HCT116 (cell line): ENCODE measurements at regions of chr17 and their contacts with region 1.

Region 1: DNA sequence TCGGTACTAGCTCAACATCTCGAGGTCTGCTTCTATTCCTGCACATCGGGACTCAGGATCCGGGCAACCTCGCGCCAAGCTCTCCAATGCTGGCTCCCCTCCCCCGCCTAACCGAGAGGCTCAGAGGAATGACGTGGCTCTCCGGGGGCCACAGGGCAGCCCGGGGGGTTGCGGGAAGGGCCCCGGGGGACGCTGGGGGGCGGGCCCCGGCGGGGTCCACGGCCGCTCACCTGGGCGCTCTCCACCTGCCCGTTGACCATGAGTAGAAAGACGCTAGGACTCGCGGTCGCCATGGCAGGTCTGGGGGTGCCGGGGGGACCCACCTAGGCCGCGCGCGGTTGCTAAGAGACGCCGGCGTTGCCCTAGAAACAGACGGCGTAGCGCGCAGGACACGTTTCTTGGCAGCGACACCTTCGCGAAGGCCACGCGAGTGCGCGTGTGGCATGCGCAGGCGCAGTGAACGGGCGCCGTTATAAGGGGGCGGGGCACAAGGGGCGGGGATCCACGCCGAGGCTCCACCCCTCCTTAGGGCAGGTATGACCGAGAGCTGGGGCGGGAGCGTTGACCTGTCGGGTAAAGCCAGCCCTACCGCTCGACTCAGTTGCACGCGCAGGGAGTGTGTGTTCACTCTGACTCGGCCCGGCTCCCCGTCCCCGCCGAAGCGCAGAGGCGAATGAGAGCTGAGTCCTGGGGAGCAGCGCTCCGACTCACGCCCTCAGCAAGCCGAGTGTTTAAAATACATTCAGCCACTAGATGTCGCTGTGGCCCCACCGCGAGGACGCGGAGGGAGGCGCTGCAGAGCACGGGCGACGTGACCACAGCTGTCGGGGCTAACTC is at the start of gene B9D1:
- DNase-seq: peak; percentile 87
- ATAC-seq: peak; percentile 86
- H3K4me3 ChIP-seq: peak within 1 kb of the TSS; percentile 80 to 91
- H3K27ac ChIP-seq: peak within 1 kb of the TSS; percentile 76
- H3K4me1 ChIP-seq: peaks cover 9 to 28% of the 10 kb centered on the region in 2 experiments
- H3K27me3 ChIP-seq: no peaks in the 10 kb centered on the region
- CTCF ChIP-seq: peak; percentile 73 to 99 (median 92)
- POLR2A ChIP-seq: peak; percentile 0
- RAD21 ChIP-seq: peak; percentile 100
- total RNA-seq, gene B9D1: 20.0 TPM

Region 2: DNA sequence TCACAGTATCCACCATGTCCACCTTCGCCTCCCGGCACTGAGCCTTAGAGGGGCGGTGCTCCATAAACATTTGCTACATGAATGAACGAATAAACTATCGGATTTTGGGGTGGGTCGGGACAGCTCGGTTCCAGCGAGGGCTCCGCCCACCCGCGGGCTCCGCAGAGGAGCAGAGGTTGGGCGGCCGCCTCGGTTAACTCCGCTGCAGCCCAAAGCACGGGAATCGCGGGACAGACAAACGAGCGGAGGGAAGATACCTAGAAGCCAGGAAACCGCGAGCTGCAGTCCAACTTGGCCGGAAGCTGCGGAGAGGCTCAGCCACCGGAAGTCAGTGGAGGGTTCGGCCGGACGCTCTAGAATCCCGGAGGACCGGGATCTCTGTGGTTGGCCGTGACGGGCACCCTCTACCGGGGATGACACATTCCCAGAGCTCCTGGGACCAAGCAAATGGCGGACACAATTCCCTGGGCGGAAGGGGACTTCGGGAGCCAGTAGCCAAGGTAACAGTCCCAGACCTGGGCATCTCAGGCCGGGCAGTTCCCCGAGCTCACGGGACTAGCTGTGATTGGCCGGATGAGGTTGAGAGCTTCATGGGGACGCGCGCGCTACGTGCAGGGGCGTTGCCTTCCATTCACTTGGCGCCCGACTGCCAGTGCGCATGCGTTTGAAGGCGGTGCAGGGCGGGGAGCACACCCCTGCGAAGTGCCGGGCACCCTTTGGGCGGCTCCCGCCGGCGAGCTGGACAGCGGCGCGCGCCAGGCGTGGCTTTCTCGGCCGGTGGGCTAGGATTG is 15.3 kb after region 1 on chr17:
- CTCF ChIA-PET with region 1: interaction called, 41 read pairs
- POLR2A ChIA-PET with region 1: interaction called, 13 read pairs
- RAD21 ChIA-PET with region 1: interaction called, 4 to 12 read pairs
- intact Hi-C with region 1: no loop called
- DNase-seq: peak; percentile 96
- ATAC-seq: peak; percentile 92
- H3K4me3 ChIP-seq: peak overlapping the region; percentile 67 to 94
- H3K27ac ChIP-seq: peak overlapping the region; percentile 84
- H3K4me1 ChIP-seq: peaks cover 9 to 18% of the 10 kb centered on the region in 2 experiments; a peak in 3 of 4 replicates
- H3K27me3 ChIP-seq: no peaks in the 10 kb centered on the region
- CTCF ChIP-seq: no peak
- POLR2A ChIP-seq: peak; percentile 83
- RAD21 ChIP-seq: no peak

Region 3: DNA sequence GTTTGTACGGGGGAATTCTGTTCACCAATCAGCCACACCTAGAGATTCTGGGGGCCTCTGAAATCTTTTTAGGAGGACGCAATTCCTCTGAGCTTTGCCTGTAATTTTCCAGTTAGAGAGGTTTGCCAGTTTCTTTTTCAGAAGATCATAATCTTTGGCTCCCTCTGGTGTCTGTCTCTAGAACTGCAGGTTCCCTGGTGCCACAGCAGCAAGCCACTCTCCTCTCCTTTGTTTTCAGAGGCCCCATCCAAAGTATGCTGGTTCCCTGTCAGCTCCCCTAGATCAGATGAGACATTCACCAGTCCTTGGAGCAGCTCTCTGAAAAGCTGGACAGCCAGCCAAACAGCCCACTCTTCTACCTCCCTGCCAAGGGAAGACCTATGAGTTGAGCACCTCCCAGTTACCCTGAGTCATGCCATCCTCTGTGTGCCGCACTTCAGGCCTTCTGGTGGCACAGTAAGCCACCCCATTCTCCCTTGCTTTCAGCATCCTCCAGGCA is 84.6 kb after region 1 on chr17:
- CTCF ChIA-PET with region 1: interaction called, 69 read pairs
- POLR2A ChIA-PET with region 1: interaction called, 3 read pairs
- RAD21 ChIA-PET with region 1: interaction called, 9 to 12 read pairs
- intact Hi-C with region 1: loop called (anchors 1 kb)
- DNase-seq: peak; percentile 62
- ATAC-seq: peak; percentile 90
- H3K4me3 ChIP-seq: no peak overlapping the region
- H3K27ac ChIP-seq: no peak overlapping the region
- H3K4me1 ChIP-seq: peaks cover 3 to 8% of the 10 kb centered on the region in 2 experiments; a peak in 3 of 4 replicates
- H3K27me3 ChIP-seq: no peaks in the 10 kb centered on the region
- CTCF ChIP-seq: peak; percentile 86 to 92 (median 87)
- POLR2A ChIP-seq: no peak
- RAD21 ChIP-seq: peak; percentile 96

Region 4: DNA sequence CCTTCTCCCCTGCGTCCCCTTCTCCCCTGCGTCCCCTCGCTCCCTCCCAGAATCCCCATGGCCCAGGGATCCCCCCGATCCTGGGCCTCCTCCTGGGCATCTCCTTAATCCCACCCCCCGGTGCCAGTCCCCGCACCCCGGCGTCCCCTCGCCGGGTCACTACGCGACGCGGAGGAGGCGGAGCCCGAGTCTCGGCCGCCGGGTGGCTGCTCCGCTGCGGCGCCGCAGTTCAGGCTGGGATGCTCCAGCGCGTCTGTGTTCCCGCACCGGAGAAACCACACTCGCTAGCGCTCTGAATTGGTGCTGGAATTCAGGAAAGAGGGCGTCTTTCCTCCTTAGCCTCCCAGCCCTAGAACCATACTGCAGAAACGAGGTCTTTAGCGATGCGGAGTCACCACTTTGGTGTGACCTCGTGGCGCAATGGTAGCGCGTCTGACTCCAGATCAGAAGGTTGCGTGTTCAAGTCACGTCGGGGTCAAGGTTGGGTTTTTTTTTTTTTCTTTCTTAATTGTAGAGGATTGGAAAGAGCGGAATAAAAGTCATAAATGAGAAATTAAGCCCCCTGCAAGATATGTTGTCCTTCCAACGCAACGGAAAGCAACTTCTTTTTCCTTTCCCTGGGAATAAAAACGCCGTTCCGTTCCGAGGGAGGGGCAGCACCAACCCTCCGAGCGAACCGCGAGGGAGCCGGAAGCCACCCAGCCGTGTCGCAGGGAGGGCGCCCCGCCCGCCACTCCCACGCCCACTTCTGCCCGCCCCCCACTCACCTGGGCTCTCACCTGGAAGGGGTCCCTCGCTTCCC is 145.5 kb after region 1 on chr17:
- CTCF ChIA-PET with region 1: interaction called, 12 read pairs
- POLR2A ChIA-PET with region 1: no interaction called
- RAD21 ChIA-PET with region 1: no interaction called
- intact Hi-C with region 1: loop called (anchors 5 kb)
- DNase-seq: peak; percentile 69
- ATAC-seq: peak; percentile 87
- H3K4me3 ChIP-seq: peak overlapping the region; percentile 55 to 67
- H3K27ac ChIP-seq: peak overlapping the region; percentile 71
- H3K4me1 ChIP-seq: peaks cover 6 to 15% of the 10 kb centered on the region in 2 experiments; a peak in 3 of 4 replicates
- H3K27me3 ChIP-seq: no peaks in the 10 kb centered on the region
- CTCF ChIP-seq: no peak
- POLR2A ChIP-seq: no peak
- RAD21 ChIP-seq: no peak

Region 5: DNA sequence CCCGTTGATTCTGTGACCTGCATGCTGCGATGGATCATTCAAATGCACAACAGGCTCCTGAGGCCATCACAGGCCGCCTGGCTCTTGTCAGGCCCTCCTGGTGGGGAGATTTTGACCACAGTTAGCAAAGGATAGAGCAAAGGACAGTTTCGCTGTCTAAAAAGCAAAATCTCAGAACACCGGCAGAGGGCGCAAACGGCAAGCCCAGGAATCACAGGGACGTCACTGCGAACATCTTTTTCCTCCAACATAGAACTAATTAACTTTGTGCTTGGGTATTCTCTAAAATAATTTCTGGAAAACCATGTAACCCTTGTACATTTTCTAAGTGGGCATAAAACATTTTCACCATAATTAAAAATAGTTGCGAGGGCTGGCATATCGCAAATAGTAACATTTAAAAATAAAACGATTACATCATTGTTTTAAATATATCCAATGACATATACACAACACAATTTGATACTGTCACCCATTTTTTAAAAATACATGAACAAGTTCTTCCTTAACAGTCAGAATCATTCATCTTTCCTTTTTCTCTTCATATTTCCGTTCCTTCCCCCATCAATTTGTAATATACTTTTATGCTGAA is 151.5 kb after region 1 on chr17:
- CTCF ChIA-PET with region 1: interaction called, 12 read pairs
- POLR2A ChIA-PET with region 1: no interaction called
- RAD21 ChIA-PET with region 1: no interaction called
- intact Hi-C with region 1: loop called (anchors 5 kb)
- DNase-seq: peak; percentile 75
- ATAC-seq: peak; percentile 98
- H3K4me3 ChIP-seq: no peak overlapping the region
- H3K27ac ChIP-seq: no peak overlapping the region
- H3K4me1 ChIP-seq: peaks cover 0 to 5% of the 10 kb centered on the region in 2 experiments; a peak in 3 of 4 replicates
- H3K27me3 ChIP-seq: no peaks in the 10 kb centered on the region
- CTCF ChIP-seq: peak; percentile 83 to 96 (median 94)
- POLR2A ChIP-seq: no peak
- RAD21 ChIP-seq: peak; percentile 96

Region 6: DNA sequence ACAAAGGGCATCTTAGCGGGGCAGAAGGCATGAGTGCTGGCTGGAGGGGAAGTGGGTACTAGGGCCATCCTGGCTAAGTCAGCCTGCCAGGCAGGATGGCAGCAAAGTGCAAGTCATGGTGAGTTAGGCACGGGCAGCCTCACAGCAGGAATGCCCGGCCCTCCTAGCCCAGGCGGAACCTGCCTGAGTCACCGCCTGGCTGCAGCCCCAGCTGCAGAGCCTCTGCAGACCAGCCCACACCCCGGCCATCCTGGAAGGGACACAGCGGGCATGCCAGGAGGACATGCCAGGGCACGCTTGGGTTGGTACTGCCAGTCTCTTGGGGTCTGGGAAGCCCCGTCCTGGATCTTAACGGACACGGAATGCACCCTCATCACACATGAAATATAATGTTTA is 390.6 kb after region 1 on chr17:
- CTCF ChIA-PET with region 1: interaction called, 5 read pairs
- POLR2A ChIA-PET with region 1: no interaction called
- RAD21 ChIA-PET with region 1: no interaction called
- intact Hi-C with region 1: loop called (anchors 5 kb)
- DNase-seq: peak; percentile 79
- ATAC-seq: peak; percentile 85
- H3K4me3 ChIP-seq: peak overlapping the region; percentile 15 to 34
- H3K27ac ChIP-seq: peak overlapping the region; percentile 90
- H3K4me1 ChIP-seq: peaks cover 38 to 47% of the 10 kb centered on the region in 2 experiments
- H3K27me3 ChIP-seq: no peaks in the 10 kb centered on the region
- CTCF ChIP-seq: no peak
- POLR2A ChIP-seq: no peak
- RAD21 ChIP-seq: no peak